Naive thymus-derived CD4-positive, alpha-beta T cell (primary cell): ENCODE measurements at regions of chr5 and their contacts with region 1.

Region 1: GRCh38 chr5:156934450-156935211 is 28.4 kb downstream of the TIMD4 start:
- DNase-seq: peak in 8 of 9 donors; percentile 37 to 68 (median 62)
- ATAC-seq: peak; percentile 81
- H3K4me3 ChIP-seq: peak overlapping the region; percentile 25
- H3K4me3 Mint-ChIP-seq: peak overlapping the region in 7 of 10 donors; percentile 17 to 63 (median 54)
- H3K27ac ChIP-seq: no peak overlapping the region
- H3K27ac Mint-ChIP-seq: peak overlapping the region; percentile 36 to 97 (median 60)
- H3K4me1 ChIP-seq: peaks cover 9 to 16% of the 10 kb centered on the region in 2 donors
- H3K4me1 Mint-ChIP-seq: peaks cover 8 to 80% (median 49%) of the 10 kb centered on the region in 7 donors
- H3K27me3 ChIP-seq: no peaks in the 10 kb centered on the region
- H3K27me3 Mint-ChIP-seq: no peaks in the 10 kb centered on the region

Region 2: DNA sequence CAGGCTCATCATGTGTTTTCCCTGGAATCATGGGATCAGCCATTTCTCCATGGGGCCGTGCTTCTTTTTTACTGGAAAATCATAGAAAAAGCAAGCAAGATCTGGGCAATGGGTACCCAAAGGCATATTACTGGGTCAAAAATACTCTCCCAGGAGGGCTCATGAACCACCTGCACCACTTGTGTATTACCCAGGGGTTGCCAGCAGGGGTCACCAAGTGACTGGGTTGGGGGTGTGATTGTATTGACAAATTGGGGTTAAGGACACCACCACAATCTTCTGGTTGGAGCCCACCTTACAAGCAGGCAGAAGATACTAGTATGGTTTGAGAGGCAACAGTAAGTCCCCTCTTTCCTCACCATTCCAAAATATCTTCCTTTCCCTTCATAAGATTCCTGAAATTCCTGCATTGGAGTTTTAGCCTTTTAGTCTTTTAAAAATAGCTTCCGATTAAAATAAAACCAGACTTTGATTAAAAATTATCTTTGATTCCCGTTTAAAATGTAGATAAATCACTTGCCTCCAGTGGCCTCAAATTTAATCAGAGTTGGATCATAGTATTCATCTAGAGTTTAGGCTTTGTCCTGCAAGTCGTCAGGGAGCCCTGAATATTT is 1317.7 kb before region 1 on chr5:
- CTCF ChIA-PET with region 1: no interaction called
- POLR2A ChIA-PET with region 1: no interaction called
- intact Hi-C with region 1: loop called in 1 of 2 experiments (anchors 2 kb)
- DNase-seq: peak in 8 of 9 donors; percentile 10 to 54 (median 18)
- ATAC-seq: peak; percentile 50
- H3K4me3 ChIP-seq: no peak overlapping the region
- H3K4me3 Mint-ChIP-seq: no peak overlapping the region
- H3K27ac ChIP-seq: no peak overlapping the region
- H3K27ac Mint-ChIP-seq: no peak overlapping the region
- H3K4me1 ChIP-seq: no peaks in the 10 kb centered on the region
- H3K4me1 Mint-ChIP-seq: peaks cover 0 to 4% (median 0%) of the 10 kb centered on the region in 7 donors
- H3K27me3 ChIP-seq: no peaks in the 10 kb centered on the region
- H3K27me3 Mint-ChIP-seq: peaks cover 12 to 41% (median 26%) of the 10 kb centered on the region in 5 donors

Region 3: GRCh38 chr5:156402387-156402921 is 532.2 kb before region 1 on chr5:
- CTCF ChIA-PET with region 1: no interaction called
- POLR2A ChIA-PET with region 1: no interaction called
- intact Hi-C with region 1: loop called (anchors 5 to 10 kb)
- DNase-seq: peak in 1 of 9 donors; percentile 26
- ATAC-seq: peak; percentile 78
- H3K4me3 ChIP-seq: no peak overlapping the region
- H3K4me3 Mint-ChIP-seq: peak overlapping the region in 1 of 10 donors; percentile 73
- H3K27ac ChIP-seq: no peak overlapping the region
- H3K27ac Mint-ChIP-seq: peak overlapping the region in 1 of 9 donors; percentile 69
- H3K4me1 ChIP-seq: no peaks in the 10 kb centered on the region
- H3K4me1 Mint-ChIP-seq: peaks cover 0 to 7% (median 0%) of the 10 kb centered on the region in 7 donors
- H3K27me3 ChIP-seq: no peaks in the 10 kb centered on the region
- H3K27me3 Mint-ChIP-seq: peaks cover 0 to 6% (median 0%) of the 10 kb centered on the region in 5 donors

Region 4: GRCh38 chr5:156835905-156836304 is 98.7 kb before region 1 on chr5:
- CTCF ChIA-PET with region 1: no interaction called
- POLR2A ChIA-PET with region 1: no interaction called
- intact Hi-C with region 1: loop called (anchors 1 kb)
- DNase-seq: no peak
- ATAC-seq: no peak
- H3K4me3 ChIP-seq: no peak overlapping the region
- H3K4me3 Mint-ChIP-seq: no peak overlapping the region
- H3K27ac ChIP-seq: no peak overlapping the region
- H3K27ac Mint-ChIP-seq: no peak overlapping the region
- H3K4me1 ChIP-seq: no peaks in the 10 kb centered on the region
- H3K4me1 Mint-ChIP-seq: peaks cover 0 to 9% (median 0%) of the 10 kb centered on the region in 7 donors
- H3K27me3 ChIP-seq: no peaks in the 10 kb centered on the region
- H3K27me3 Mint-ChIP-seq: no peaks in the 10 kb centered on the region

Region 5: DNA sequence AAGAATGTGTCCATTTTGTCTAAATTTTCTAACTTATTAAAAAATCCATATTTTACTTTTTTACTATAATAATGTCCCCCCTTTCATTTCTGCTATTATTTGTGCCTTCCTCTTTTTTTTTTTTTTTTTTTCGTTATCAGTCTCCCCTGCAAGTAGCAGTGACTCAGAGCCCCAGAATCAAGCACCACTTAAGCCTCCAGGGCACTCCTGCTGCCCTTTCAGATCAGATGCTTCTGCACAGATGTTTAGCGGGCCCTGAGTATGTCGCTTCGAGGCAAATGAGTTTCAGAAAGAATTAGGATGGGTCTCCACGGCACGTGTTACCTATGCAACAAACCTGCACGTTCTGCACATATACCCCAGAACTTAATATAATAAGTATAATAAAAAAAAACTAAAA is 196.3 kb after region 1 on chr5:
- CTCF ChIA-PET with region 1: interaction called, 6 read pairs
- POLR2A ChIA-PET with region 1: no interaction called
- intact Hi-C with region 1: loop called (anchors 1 kb)
- DNase-seq: no peak
- ATAC-seq: no peak
- H3K4me3 ChIP-seq: no peak overlapping the region
- H3K4me3 Mint-ChIP-seq: no peak overlapping the region
- H3K27ac ChIP-seq: no peak overlapping the region
- H3K27ac Mint-ChIP-seq: no peak overlapping the region
- H3K4me1 ChIP-seq: no peaks in the 10 kb centered on the region
- H3K4me1 Mint-ChIP-seq: peaks cover 6 to 46% (median 26%) of the 10 kb centered on the region in 7 donors
- H3K27me3 ChIP-seq: no peaks in the 10 kb centered on the region
- H3K27me3 Mint-ChIP-seq: no peaks in the 10 kb centered on the region